MCF 10A (cell line): ENCODE measurements at regions of chr11 and their contacts with region 1.

Region 1: DNA sequence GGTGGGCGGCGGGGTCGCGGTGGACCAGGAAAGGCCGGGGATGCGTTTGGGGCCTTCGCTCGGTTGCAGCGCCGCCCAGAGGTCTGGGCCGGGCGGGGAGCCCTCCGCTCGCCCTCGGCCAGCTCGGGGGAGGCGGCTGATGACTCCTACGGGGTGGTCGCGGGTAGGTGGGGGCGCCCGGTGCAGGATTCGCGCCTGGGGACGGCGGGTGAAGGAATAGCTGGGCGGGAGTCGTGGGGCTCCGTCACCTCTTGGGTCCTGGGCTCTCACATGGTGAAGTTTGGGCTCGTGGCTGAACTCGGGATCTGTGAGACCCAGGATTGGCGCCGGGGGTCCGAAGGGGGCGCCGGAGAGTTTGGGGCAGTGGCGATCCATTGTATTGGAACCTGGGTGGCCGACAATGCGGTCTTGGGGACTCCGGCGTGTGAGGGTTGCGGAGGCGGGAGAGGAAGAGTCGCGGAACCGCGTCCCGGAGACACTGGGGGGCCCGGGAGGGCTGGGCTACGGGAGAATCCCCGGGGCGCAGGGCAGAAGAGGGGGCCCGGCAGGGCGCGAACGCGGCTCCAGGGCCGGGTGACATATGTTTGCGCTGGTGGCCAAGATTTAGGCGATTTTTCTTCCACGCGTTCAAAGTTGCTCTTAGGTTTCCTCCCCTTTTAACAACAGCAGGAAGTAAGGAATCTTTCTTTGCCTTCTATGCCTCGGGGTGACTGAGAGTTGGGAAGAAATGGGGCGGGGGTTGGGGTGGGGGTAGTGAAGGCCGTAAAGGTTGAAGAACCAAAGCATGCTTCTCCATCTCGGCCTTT is 935 bp downstream of the QSER1 start:
- DNase-seq: peak; percentile 39
- H3K4me3 Mint-ChIP-seq: peak overlapping the region; percentile 97
- H3K27ac Mint-ChIP-seq: peak overlapping the region; percentile 89
- H3K4me1 Mint-ChIP-seq: peaks cover 24% of the 10 kb centered on the region
- H3K27me3 Mint-ChIP-seq: no peaks in the 10 kb centered on the region
- CTCF ChIP-seq: peak; percentile 39

Region 2: DNA sequence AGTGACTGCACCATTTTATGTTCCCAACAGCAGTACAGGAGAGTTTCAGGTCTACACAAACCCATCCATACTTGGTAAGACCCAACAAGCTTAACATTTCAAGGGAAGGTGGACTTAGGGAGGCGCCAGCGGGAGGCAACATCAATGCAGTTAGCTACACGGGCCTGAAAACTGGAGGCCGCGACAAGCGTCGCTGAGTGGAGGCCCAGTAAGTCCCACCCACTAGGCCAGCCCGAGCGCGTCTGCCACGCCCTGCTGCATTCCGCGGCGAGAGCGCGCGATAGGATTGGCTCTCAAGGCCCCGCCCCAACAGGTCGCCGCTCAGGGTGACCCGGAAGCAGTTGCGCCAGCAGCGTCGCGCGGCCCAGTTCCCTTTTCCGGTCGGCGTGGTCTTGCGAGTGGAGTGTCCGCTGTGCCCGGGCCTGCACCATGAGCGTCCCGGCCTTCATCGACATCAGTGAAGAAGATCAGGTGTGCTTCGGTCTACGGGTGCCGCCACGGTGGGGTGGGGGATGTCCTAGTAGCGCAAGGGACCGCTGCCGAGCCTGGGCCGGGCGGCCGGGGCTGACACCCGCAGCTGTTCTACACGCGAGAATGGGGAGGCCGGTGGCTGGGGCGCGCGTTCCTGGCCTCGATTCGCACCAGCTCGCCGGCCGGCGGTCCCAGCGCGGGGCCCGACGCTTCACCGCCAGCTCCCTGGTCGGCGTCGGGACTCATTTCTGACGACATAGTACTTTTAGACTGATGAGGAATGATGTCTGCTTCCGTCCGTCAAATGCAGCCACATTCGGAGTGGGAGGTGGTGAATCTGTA is 309.9 kb before region 1 on chr11 and contains the start of gene EIF3M:
- CTCF ChIA-PET with region 1: interaction called, 3 read pairs
- POLR2A ChIA-PET with region 1: interaction called, 12 read pairs
- intact Hi-C with region 1: no loop called
- DNase-seq: peak; percentile 96
- H3K4me3 Mint-ChIP-seq: peak within 1 kb of the TSS; percentile 96
- H3K27ac Mint-ChIP-seq: peak within 1 kb of the TSS; percentile 98
- H3K4me1 Mint-ChIP-seq: peaks cover 18% of the 10 kb centered on the region
- H3K27me3 Mint-ChIP-seq: no peaks in the 10 kb centered on the region
- CTCF ChIP-seq: no peak
- total RNA-seq, gene EIF3M: 356 and 443 TPM in 2 replicates

Region 3: GRCh38 chr11:32775908-32776307 is 117.6 kb before region 1 on chr11:
- CTCF ChIA-PET with region 1: no interaction called
- POLR2A ChIA-PET with region 1: no interaction called
- intact Hi-C with region 1: no loop called
- DNase-seq: no peak
- H3K4me3 Mint-ChIP-seq: no peak overlapping the region
- H3K27ac Mint-ChIP-seq: no peak overlapping the region
- H3K4me1 Mint-ChIP-seq: peaks cover 11% of the 10 kb centered on the region
- H3K27me3 Mint-ChIP-seq: no peaks in the 10 kb centered on the region
- CTCF ChIP-seq: no peak

Region 4: GRCh38 chr11:32829680-32830412 is 63.7 kb before region 1 on chr11 and contains the start of gene PRRG4:
- CTCF ChIA-PET with region 1: interaction called, 7 read pairs
- POLR2A ChIA-PET with region 1: interaction called, 76 read pairs
- intact Hi-C with region 1: loop called (anchors 5 kb)
- DNase-seq: peak; percentile 77
- H3K4me3 Mint-ChIP-seq: peak within 1 kb of the TSS; percentile 81
- H3K27ac Mint-ChIP-seq: peak within 1 kb of the TSS; percentile 81
- H3K4me1 Mint-ChIP-seq: no peaks in the 10 kb centered on the region
- H3K27me3 Mint-ChIP-seq: no peaks in the 10 kb centered on the region
- CTCF ChIP-seq: no peak
- total RNA-seq, gene PRRG4: 1.1 and 1.2 TPM in 2 replicates

Region 5: DNA sequence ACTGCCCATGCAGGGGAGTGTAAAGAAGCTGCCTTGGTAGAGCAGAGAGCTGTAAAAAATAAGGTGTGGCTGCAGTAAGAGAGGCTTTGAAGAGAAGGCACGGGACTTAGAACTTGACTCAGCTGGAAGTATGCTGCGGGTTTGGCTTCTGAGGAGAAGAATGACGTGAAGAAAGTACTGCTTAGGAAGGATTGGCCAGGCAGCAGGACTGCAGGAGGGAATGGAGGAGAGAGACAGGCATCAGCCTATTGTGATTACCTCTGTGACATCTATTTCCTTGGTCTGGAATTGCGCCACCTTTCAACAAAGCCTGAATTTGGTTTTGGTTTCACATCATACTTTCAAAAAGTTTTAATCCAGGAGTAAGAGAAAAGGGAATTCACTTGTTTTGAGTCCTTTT is 41.3 kb before region 1 on chr11:
- CTCF ChIA-PET with region 1: interaction called, 7 read pairs
- POLR2A ChIA-PET with region 1: interaction called, 28 read pairs
- intact Hi-C with region 1: no loop called
- DNase-seq: peak; percentile 75
- H3K4me3 Mint-ChIP-seq: peak overlapping the region; percentile 57
- H3K27ac Mint-ChIP-seq: peak overlapping the region; percentile 82
- H3K4me1 Mint-ChIP-seq: peaks cover 13% of the 10 kb centered on the region
- H3K27me3 Mint-ChIP-seq: no peaks in the 10 kb centered on the region
- CTCF ChIP-seq: no peak

Region 6: GRCh38 chr11:33045551-33046255 is 152.2 kb after region 1 on chr11:
- CTCF ChIA-PET with region 1: no interaction called
- POLR2A ChIA-PET with region 1: interaction called, 28 read pairs
- intact Hi-C with region 1: no loop called
- DNase-seq: peak; percentile 81
- H3K4me3 Mint-ChIP-seq: no peak overlapping the region
- H3K27ac Mint-ChIP-seq: peak overlapping the region; percentile 76
- H3K4me1 Mint-ChIP-seq: peaks cover 38% of the 10 kb centered on the region
- H3K27me3 Mint-ChIP-seq: no peaks in the 10 kb centered on the region
- CTCF ChIP-seq: no peak